ENCODE measurements at regions of chr11 and their contacts with region 1.

Region 1: GRCh38 chr11:57426929-57427726 is at the start of gene SLC43A3:
- DNase-seq: peak; percentile 41
- ATAC-seq: peak; percentile 80
- H3K4me3 ChIP-seq: peak within 1 kb of the TSS; percentile 88
- H3K27ac ChIP-seq: peak within 1 kb of the TSS; percentile 97
- H3K4me1 ChIP-seq: peaks cover 31% of the 10 kb centered on the region
- H3K27me3 ChIP-seq: no peaks in the 10 kb centered on the region
- CTCF ChIP-seq: no peak
- EP300 ChIP-seq: 0 out of 4 replicates have a peak, but pooled peaks of 1 of the 2 experiments have one; percentile 16
- POLR2A ChIP-seq: peak; percentile 90
- RAD21 ChIP-seq: no peak
- polyA plus RNA-seq, gene SLC43A3: 37.5 to 79.9 TPM

Region 2: DNA sequence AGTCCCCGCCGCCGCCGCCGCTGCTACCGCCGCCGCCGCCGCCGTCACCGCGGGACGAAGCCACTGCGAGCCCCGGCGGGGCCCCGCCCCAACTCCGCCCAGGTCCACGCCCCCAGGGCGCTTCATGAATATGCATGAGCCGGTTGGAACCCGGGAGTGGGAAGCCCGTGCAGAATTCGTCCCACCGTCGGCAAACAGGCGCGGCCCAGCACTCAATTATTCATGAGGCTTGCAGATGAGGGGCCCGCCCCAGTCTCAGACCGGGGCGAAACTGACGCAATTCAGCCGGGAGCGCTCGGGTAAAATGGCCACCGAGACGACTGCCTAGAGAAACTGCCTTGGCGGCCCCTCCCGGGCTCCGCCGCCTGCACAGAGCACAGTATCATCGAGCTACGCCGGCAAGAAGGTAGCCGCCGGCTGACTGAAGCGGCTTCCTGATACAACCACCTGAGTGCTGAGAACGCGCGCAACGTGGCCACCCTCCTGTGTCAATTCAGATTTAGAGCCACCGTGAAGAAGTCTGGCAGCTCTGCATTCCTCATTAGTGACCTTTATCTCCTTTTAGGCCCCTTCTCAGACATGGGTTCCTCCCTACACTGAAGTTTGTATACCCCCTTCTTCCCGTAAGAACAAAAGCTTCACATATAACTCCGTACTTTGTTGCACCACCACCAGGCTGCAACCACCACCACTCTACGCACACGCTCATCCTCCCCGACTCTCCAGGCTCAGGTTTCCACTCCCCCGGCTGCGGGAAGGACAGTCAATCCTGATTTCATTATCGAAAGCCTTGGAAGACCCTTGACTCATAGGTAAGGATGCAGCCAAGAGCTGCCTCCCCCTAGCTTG is 102.0 kb before region 1 on chr11 and contains the start of gene TNKS1BP1:
- CTCF ChIA-PET with region 1: interaction called, 3 read pairs
- POLR2A ChIA-PET with region 1: interaction called, 12 read pairs
- RAD21 ChIA-PET with region 1: interaction called, 5 read pairs
- SMC1A ChIA-PET with region 1: no interaction called
- in situ Hi-C with region 1: no loop called
- intact Hi-C with region 1: no loop called
- DNase-seq: peak; percentile 56
- ATAC-seq: peak; percentile 87
- H3K4me3 ChIP-seq: peak within 1 kb of the TSS; percentile 51
- H3K27ac ChIP-seq: peak within 1 kb of the TSS; percentile 81
- H3K4me1 ChIP-seq: peaks cover 22% of the 10 kb centered on the region
- H3K27me3 ChIP-seq: no peaks in the 10 kb centered on the region
- CTCF ChIP-seq: no peak
- EP300 ChIP-seq: no peak
- POLR2A ChIP-seq: peak; percentile 90
- RAD21 ChIP-seq: no peak
- polyA plus RNA-seq, gene TNKS1BP1: 0.26 to 0.47 TPM

Region 3: DNA sequence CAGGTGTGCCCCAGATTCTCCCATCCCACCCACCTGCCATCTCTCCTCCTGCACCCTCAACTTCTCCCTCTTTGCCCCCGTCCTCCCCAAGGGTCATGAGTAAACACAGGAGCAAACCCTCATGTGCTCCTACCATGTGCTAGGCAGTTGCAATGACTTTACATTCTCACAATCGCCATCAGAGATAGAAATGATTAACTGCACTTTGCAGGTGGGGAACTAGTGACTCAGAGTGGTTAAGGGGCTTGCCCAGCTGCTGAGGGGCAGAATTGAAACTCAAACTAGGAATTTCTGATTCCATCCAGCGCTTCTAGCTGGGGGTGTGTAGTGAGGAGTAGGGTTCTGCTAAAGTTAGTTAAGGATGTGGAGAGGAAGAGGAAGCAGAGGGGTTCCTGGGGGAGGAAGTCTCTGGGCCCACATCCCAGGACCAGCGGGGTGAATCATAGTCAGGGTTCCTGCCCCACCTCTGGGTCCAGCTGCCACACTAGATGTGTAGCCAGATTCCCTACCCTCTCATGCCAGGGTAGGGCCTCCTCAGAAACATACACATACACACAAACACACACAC is 20.7 kb before region 1 on chr11:
- CTCF ChIA-PET with region 1: interaction called, 3 read pairs
- POLR2A ChIA-PET with region 1: interaction called, 11 read pairs
- RAD21 ChIA-PET with region 1: interaction called, 21 read pairs
- SMC1A ChIA-PET with region 1: interaction called, 4 read pairs
- in situ Hi-C with region 1: no loop called
- intact Hi-C with region 1: loop called (anchors 1 kb)
- DNase-seq: peak; percentile 64
- ATAC-seq: peak; percentile 90
- H3K4me3 ChIP-seq: no peak overlapping the region
- H3K27ac ChIP-seq: peak overlapping the region; percentile 55
- H3K4me1 ChIP-seq: peaks cover 19% of the 10 kb centered on the region
- H3K27me3 ChIP-seq: no peaks in the 10 kb centered on the region
- CTCF ChIP-seq: no peak
- EP300 ChIP-seq: peak; percentile 82 to 83
- POLR2A ChIP-seq: no peak; the same call in 1 of the 2 replicates
- RAD21 ChIP-seq: no peak

Region 4: GRCh38 chr11:57417056-57417455 is 10.1 kb before region 1 on chr11:
- CTCF ChIA-PET with region 1: interaction called, 7 read pairs
- POLR2A ChIA-PET with region 1: interaction called, 22 read pairs
- RAD21 ChIA-PET with region 1: interaction called, 3 read pairs
- SMC1A ChIA-PET with region 1: interaction called, 4 read pairs
- in situ Hi-C with region 1: no loop called
- intact Hi-C with region 1: no loop called
- DNase-seq: no peak
- ATAC-seq: 0 out of 3 replicates have a peak, but pooled peaks have one; percentile 10
- H3K4me3 ChIP-seq: no peak overlapping the region
- H3K27ac ChIP-seq: no peak overlapping the region
- H3K4me1 ChIP-seq: peaks cover 22% of the 10 kb centered on the region
- H3K27me3 ChIP-seq: no peaks in the 10 kb centered on the region
- CTCF ChIP-seq: no peak
- EP300 ChIP-seq: no peak
- POLR2A ChIP-seq: no peak
- RAD21 ChIP-seq: no peak

Region 5: GRCh38 chr11:57480409-57481137 is 53.4 kb after region 1 on chr11:
- CTCF ChIA-PET with region 1: interaction called, 17 read pairs
- POLR2A ChIA-PET with region 1: no interaction called
- RAD21 ChIA-PET with region 1: interaction called, 3 read pairs
- SMC1A ChIA-PET with region 1: interaction called, 4 read pairs
- in situ Hi-C with region 1: no loop called
- intact Hi-C with region 1: loop called (anchors 5 kb)
- DNase-seq: no peak
- ATAC-seq: peak; percentile 48
- H3K4me3 ChIP-seq: no peak overlapping the region
- H3K27ac ChIP-seq: no peak overlapping the region
- H3K4me1 ChIP-seq: peaks cover 26% of the 10 kb centered on the region
- H3K27me3 ChIP-seq: no peaks in the 10 kb centered on the region
- CTCF ChIP-seq: peak; percentile 71 to 91 (median 86)
- EP300 ChIP-seq: no peak
- POLR2A ChIP-seq: no peak
- RAD21 ChIP-seq: peak; percentile 59

Region 6: GRCh38 chr11:57546869-57547475 is 119.8 kb after region 1 on chr11:
- CTCF ChIA-PET with region 1: no interaction called
- POLR2A ChIA-PET with region 1: no interaction called
- RAD21 ChIA-PET with region 1: no interaction called
- SMC1A ChIA-PET with region 1: no interaction called
- in situ Hi-C with region 1: no loop called
- intact Hi-C with region 1: no loop called
- DNase-seq: no peak
- ATAC-seq: peak; percentile 82
- H3K4me3 ChIP-seq: no peak overlapping the region
- H3K27ac ChIP-seq: peak overlapping the region; percentile 48
- H3K4me1 ChIP-seq: peaks cover 15% of the 10 kb centered on the region
- H3K27me3 ChIP-seq: no peaks in the 10 kb centered on the region
- CTCF ChIP-seq: no peak
- EP300 ChIP-seq: 0 out of 4 replicates have a peak, but pooled peaks of 1 of the 2 experiments have one; percentile 15
- POLR2A ChIP-seq: no peak
- RAD21 ChIP-seq: no peak

Region 7: DNA sequence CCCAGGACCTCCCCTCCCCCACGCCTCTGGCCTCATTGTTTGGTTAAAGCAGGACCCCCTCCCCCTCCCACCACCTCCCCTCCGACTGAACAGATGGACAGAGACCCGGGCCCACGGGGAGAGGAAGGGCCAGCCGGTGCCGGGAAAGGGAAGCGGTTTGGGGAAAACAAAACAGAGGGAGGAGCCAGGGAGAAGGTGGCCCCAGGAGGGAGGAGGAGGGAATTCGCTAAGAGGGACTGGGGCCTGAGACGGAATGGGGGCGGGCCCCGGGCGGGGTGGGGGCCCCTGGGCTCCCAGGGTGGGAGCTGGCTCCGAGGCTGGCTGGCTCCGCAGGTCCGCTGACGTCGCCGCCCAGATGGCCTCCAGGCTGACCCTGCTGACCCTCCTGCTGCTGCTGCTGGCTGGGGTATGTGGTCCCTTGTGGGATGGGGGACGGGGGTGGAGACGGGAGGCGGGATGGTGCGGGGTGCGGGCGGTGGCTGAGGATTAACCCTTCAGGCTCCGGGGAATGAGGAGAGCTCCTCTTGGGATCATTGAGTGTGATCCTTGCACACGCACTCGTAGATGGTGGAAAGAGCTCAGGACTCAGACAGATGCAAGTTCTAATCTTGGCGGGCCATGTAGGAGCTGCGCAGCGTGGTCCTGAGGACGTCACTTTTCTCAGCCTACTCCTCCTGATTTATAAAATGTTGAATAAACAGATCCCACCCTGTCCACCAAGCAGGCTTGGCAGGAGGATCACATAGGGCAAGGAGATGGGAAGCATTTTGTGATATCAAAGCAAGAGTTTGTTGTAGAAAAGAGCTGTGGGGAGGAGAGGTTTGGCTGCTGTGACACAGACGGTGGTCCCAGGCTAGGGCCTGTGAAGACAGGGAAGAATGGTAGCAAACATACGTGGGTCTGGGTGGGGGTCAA is 171.0 kb after region 1 on chr11:
- CTCF ChIA-PET with region 1: no interaction called
- POLR2A ChIA-PET with region 1: no interaction called
- RAD21 ChIA-PET with region 1: no interaction called
- SMC1A ChIA-PET with region 1: no interaction called
- in situ Hi-C with region 1: no loop called
- intact Hi-C with region 1: no loop called
- DNase-seq: no peak
- ATAC-seq: no peak
- H3K4me3 ChIP-seq: no peak overlapping the region
- H3K27ac ChIP-seq: no peak overlapping the region
- H3K4me1 ChIP-seq: no peaks in the 10 kb centered on the region
- H3K27me3 ChIP-seq: peaks cover 4 to 5% of the 10 kb centered on the region in 2 experiments
- CTCF ChIP-seq: no peak
- EP300 ChIP-seq: no peak
- POLR2A ChIP-seq: no peak
- RAD21 ChIP-seq: no peak

Region 8: DNA sequence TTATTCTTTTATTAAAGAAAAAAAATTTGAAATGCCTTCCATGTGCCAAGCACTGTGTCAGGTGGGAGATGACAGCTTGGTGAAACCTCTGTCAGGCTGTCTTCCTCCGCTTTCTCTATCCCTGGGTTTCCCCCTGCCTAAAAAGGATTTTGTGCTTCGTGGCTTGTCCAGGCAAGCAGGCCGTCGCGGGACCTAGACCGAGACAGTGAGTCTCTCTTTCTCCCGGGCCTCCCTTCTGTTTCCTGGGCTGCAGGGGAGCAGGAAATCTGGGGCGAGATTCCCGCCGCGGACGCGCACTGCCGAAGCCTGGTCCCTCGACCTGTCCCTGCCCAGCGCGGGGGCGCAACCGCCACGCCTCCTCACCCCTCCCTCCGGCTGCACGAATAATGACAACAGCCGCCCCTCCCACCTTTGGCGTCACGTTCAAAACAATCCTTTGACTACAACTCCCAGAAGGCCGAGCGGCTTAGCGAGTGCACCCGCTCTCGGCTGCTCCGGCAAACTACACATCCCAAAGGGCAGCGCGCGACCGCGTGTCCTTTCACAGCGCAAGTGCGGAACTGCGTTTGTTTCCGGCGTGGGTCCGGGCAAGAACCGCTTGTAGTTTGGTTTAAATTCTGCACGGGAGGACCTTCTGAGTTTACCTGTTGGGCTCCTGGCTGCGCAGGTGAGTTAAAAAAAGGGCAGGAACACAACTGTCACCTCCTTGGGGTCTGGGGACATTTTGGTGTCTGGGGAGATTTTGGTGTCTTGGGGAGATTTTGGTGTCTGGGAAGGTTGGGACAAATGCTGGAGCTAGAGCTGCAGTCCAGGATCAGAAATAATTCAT is 230.3 kb after region 1 on chr11 and contains the start of gene CLP1:
- CTCF ChIA-PET with region 1: no interaction called
- POLR2A ChIA-PET with region 1: interaction called, 5 read pairs
- RAD21 ChIA-PET with region 1: no interaction called
- SMC1A ChIA-PET with region 1: no interaction called
- in situ Hi-C with region 1: no loop called
- intact Hi-C with region 1: loop called (anchors 1 kb)
- DNase-seq: peak; percentile 94
- ATAC-seq: peak; percentile 99
- H3K4me3 ChIP-seq: peak within 1 kb of the TSS; percentile 91
- H3K27ac ChIP-seq: peak within 1 kb of the TSS; percentile 75
- H3K4me1 ChIP-seq: peaks cover 6% of the 10 kb centered on the region; the same call in 1 of the 2 replicates
- H3K27me3 ChIP-seq: no peaks in the 10 kb centered on the region
- CTCF ChIP-seq: no peak
- EP300 ChIP-seq: no peak
- POLR2A ChIP-seq: peak; percentile 81
- RAD21 ChIP-seq: no peak
- polyA plus RNA-seq, gene CLP1: 33.6 to 45.7 TPM